ENCODE measurements at regions of chr12 and their contacts with region 1.

Region 1: DNA sequence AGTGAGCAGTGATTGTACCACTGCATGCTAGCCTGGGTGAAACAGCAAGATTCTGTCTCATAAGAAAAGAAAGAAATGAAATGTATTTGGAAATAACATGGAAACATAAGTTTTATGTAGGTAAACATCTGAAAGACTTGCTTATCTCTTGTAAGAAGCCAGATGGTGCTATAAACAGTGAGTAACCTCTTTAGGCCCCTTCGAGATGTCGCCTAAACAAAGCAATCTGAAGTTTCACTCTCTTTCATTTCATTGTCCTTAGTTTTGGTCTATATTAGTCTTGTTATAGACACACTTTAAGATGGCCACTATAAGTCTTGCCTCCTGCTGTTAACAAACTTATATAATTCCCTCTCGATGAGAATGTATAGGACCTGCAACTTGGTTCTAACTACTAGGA is 472.6 kb upstream of the ATP2B1 start:
- DNase-seq: no peak
- ATAC-seq: no peak
- H3K4me3 ChIP-seq: no peak overlapping the region
- H3K27ac ChIP-seq: no peak overlapping the region
- H3K4me1 ChIP-seq: no peaks in the 10 kb centered on the region
- H3K27me3 ChIP-seq: 0 out of 2 replicates have a peak, but pooled peaks cover 1% of the 10 kb centered on the region
- CTCF ChIP-seq: no peak
- POLR2A ChIP-seq: no peak
- RAD21 ChIP-seq: no peak

Region 2: DNA sequence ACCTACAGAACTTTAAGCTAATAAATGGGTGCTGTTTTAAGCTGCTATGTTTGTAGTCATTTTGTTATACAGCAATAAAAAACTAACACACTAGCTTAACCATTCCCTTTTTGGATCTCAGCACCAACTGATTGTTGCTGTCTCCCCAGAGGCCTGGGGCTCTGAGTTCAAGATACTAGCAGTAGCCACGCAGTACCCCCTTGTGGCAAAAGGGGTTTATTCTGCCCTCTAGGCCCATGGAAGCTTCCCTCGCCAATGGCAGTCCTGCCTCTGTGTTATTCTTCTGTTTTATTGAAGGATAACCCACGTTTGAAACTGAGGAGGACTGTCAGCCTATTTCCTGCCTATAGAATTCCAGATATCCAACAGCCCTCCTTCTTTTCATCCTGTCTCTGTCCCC is 17.2 kb before region 1 on chr12:
- CTCF ChIA-PET with region 1: no interaction called
- POLR2A ChIA-PET with region 1: no interaction called
- dilution Hi-C with region 1: no loop called
- in situ Hi-C with region 1: no loop called
- intact Hi-C with region 1: loop called (anchors 1 kb)
- DNase-seq: no peak
- ATAC-seq: no peak
- H3K4me3 ChIP-seq: no peak overlapping the region
- H3K27ac ChIP-seq: no peak overlapping the region
- H3K4me1 ChIP-seq: no peaks in the 10 kb centered on the region
- H3K27me3 ChIP-seq: peaks cover 1% of the 10 kb centered on the region; the same call in 1 of the 2 replicates
- CTCF ChIP-seq: peak; percentile 16; the same call in 1 of the 2 replicates
- POLR2A ChIP-seq: no peak
- RAD21 ChIP-seq: no peak

Region 3: DNA sequence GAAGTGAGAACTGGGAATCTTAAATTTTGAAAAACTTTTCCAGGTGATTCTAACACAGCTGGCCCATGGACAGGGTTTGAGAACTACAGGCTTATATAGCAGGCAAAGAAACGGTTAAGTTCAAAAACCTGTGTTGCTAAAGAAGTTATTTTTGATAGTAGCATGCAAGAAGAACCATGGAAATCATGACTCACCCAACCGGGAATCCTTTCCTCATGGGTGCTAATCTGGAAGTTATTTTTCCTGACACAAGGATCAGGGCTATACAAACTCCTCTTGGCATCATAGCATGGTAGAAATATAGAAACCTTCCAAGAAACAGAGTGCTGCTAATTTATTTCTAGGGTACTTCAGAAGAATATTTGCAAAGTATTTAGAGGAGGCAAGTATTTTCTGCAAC is 185.1 kb after region 1 on chr12:
- CTCF ChIA-PET with region 1: no interaction called
- POLR2A ChIA-PET with region 1: no interaction called
- dilution Hi-C with region 1: no loop called
- in situ Hi-C with region 1: no loop called
- intact Hi-C with region 1: no loop called
- DNase-seq: peak; percentile 36
- ATAC-seq: no peak
- H3K4me3 ChIP-seq: no peak overlapping the region
- H3K27ac ChIP-seq: no peak overlapping the region
- H3K4me1 ChIP-seq: no peaks in the 10 kb centered on the region
- H3K27me3 ChIP-seq: no peaks in the 10 kb centered on the region
- CTCF ChIP-seq: no peak
- POLR2A ChIP-seq: no peak
- RAD21 ChIP-seq: no peak